ENCODE measurements at regions of chr19 and their contacts with region 1.

Region 1: DNA sequence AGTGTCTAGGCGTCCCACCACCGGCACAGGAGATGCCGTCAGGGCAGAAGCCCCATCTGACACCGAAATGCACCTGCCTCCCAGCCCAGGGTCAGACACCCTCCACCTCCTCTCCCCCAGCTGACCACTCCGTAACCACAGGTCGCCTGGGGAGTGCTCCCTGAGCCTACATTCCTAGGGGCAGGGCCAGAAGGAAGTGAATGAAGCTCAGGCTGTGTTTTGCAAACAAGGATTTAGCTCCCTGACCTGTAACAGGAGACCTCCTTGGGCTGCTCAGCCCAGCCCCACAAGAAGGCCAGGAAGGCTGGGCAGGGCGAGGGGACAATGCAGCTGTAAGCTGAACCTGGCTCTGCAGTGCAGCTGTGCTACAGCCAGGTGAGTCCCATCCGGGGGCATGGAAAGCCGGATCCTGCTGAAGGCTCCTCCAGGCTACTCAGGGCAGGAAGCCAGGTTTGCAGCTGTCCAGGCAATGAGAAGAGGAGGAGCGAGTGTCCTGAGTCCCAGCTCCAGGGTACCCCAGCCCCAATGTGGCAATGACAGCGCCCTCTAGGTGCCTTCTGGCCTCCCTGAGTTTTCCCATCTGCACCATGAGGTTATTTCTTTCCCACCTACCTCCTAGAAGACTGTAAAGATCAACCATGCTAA is 42.1 kb downstream of the RHPN2 start:
- DNase-seq: peak; percentile 76
- ATAC-seq: peak; percentile 96
- H3K4me3 Mint-ChIP-seq: peak overlapping the region; percentile 54
- H3K27ac Mint-ChIP-seq: peak overlapping the region; percentile 98
- H3K4me1 Mint-ChIP-seq: peaks cover 29% of the 10 kb centered on the region
- H3K27me3 Mint-ChIP-seq: no peaks in the 10 kb centered on the region
- CTCF ChIP-seq: 0 out of 2 replicates have a peak, but pooled peaks have one; percentile 19

Region 2: DNA sequence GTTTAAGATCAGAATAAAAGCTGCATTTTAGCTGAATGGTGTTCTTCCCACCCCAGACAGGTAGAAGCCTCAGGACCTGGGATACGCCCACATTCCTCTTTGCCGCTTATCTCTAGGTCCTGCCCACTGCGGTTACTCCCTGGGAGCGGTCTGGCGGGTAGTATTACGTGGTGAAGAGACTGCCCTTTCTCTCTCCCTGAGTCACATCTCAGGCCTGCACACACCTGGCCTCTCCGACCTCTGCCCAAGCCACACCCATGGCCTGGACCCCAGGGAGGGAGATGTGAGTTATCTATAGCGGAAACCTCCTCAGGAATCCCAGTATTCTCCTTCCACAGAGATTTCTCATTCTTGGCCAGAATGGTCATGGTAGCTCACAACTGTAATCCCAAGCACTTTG is 24.8 kb after region 1 on chr19:
- CTCF ChIA-PET with region 1: interaction called, 10 read pairs
- POLR2A ChIA-PET with region 1: interaction called, 3 read pairs
- DNase-seq: peak; percentile 37
- ATAC-seq: peak; percentile 96
- H3K4me3 Mint-ChIP-seq: no peak overlapping the region
- H3K27ac Mint-ChIP-seq: peak overlapping the region; percentile 84
- H3K4me1 Mint-ChIP-seq: peaks cover 18% of the 10 kb centered on the region
- H3K27me3 Mint-ChIP-seq: no peaks in the 10 kb centered on the region
- CTCF ChIP-seq: no peak

Measured in WTC11 (cell line).